ENCODE measurements at regions of chr19 and their contacts with region 1.

Region 1: DNA sequence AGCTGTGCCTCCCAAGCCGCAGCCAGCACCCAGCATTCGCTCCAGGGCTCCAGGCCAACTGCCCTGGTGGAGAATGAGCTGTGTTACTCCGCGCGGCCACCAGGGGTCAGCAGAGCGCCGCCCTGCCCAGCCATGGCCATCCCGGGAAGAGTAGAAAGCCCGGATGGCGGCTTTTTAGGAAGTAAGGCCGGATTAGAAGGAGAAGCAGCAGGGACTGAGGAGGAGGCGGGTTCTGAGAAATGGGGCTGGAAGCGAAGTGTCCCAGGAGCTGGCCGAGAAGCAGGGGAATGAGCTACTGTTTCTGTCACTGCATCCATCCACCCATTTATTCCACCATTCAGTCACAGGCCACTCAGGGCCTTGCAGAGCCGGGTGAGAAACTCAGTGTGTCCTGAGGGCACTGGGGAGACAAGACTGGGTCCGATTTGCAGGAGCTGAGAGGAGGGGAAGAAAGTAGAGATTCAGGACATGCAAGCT is 6.6 kb upstream of the NPAS1 start:
- DNase-seq: peak; percentile 82
- CTCF ChIP-seq: peak; percentile 98

Region 2: DNA sequence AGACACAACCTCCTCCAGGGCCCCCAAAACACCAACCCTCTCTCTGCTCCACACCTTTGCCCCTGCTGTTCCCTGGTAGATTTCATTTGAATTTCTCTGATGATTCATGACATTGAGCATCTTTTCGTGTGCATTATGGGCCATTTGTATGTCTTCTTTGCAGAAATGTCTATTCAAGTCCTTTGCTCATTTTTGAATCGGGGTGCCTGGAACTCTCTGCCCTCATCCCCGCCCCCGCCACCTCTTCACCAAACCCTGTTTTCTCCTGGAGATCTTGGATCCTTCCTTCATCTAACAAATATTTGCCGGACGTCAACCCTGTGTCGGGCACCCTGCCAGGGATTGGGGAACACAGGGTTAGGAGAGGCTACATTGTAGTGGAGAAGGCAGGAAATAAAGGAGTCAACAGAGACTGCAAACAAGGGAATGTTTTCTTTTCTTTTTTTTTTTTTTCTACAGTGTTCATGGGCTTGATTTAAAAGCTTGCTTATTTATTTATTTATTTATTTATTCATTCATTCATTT is 199.2 kb before region 1 on chr19:
- CTCF ChIA-PET with region 1: no interaction called
- POLR2A ChIA-PET with region 1: no interaction called
- DNase-seq: no peak
- CTCF ChIP-seq: no peak

Region 3: GRCh38 chr19:46838160-46838559 is 174.9 kb before region 1 on chr19:
- CTCF ChIA-PET with region 1: no interaction called
- POLR2A ChIA-PET with region 1: no interaction called
- DNase-seq: no peak
- CTCF ChIP-seq: no peak

Region 4: GRCh38 chr19:46967578-46968027 is 45.5 kb before region 1 on chr19:
- CTCF ChIA-PET with region 1: no interaction called
- POLR2A ChIA-PET with region 1: no interaction called
- DNase-seq: no peak
- CTCF ChIP-seq: no peak

Region 5: GRCh38 chr19:46990991-46991676 is 21.9 kb before region 1 on chr19:
- CTCF ChIA-PET with region 1: interaction called, 53 read pairs
- POLR2A ChIA-PET with region 1: no interaction called
- DNase-seq: peak; percentile 70
- CTCF ChIP-seq: peak; percentile 91

Region 6: GRCh38 chr19:47035127-47036096 is 22.3 kb after region 1 on chr19:
- CTCF ChIA-PET with region 1: interaction called, 53 read pairs
- POLR2A ChIA-PET with region 1: no interaction called
- DNase-seq: peak; percentile 97
- CTCF ChIP-seq: peak; percentile 93

Region 7: GRCh38 chr19:47124937-47125668 is 112.0 kb after region 1 on chr19:
- CTCF ChIA-PET with region 1: interaction called, 21 read pairs
- POLR2A ChIA-PET with region 1: no interaction called
- DNase-seq: peak; percentile 63
- CTCF ChIP-seq: peak; percentile 50

Region 8: DNA sequence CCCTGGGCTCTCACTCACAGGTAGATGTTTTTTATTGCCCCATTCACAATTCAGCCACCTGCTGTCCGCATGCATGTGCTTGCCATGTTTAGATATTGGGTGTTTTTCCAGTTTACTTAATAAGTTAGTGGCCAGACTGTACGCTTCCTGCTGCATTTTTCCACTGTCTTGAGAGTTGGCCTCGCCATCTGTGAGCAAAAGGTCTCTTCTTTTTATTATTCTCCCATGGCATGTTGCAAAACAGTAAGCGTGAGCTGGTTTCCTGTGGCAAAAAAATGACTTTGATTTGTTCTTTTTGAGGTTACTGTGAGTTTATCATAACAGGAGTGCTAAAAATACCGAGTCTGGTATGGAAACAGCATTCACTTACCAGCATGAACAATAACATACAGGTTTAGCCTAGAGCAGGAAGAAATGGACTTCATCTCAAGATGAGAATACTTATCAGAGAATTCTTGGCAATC is 163.6 kb after region 1 on chr19:
- CTCF ChIA-PET with region 1: interaction called, 10 read pairs
- POLR2A ChIA-PET with region 1: no interaction called
- DNase-seq: no peak
- CTCF ChIP-seq: no peak

Measured in GM10248 (cell line).